CD8-positive, alpha-beta T cell (primary cell): ENCODE measurements at regions of chr21 and their contacts with region 1.

Region 1: DNA sequence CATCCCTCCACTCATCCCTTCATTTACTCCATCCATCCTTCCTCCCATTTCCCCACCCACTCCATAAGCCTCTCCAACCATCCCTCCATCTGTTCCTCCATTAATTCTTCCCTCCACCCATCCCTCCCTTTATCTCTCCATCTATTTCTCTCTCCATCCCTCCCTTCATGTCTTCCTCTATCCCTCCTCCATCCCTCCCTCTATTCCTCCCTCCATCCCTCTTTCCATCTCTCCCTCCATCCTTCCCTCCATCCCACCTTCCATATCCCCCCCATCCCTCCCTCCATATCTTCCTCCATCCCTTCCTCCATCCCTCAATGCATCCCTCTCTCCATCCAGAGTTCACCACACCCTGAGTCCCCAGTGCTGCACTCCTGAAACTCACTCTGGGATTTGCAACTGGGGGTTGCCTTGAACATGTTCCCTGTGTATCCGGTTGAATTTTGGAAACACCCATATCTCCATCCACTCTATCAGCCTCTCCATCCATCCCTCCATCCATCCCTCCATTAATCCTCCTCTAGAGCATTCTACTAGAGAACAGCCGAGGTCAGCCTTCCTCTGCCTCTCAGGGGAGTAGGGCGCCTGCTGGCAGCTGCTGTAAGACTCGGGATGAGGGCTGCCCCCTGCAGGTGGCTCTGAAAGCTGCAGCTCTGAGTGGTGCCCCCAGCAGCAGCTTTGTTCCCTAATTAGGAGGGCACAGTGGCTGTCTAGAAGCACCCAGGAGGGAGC is 39.4 kb downstream of the ABCG1 start:
- DNase-seq: peak; percentile 70 to 89 (median 84)
- ATAC-seq: peak; percentile 95
- H3K4me3 ChIP-seq: no peak overlapping the region
- H3K4me3 Mint-ChIP-seq: no peak overlapping the region
- H3K27ac ChIP-seq: no peak overlapping the region
- H3K27ac Mint-ChIP-seq: peak overlapping the region; percentile 42
- H3K4me1 ChIP-seq: peaks cover 14% of the 10 kb centered on the region
- H3K4me1 Mint-ChIP-seq: peaks cover 33% of the 10 kb centered on the region
- H3K27me3 ChIP-seq: no peaks in the 10 kb centered on the region
- H3K27me3 Mint-ChIP-seq: no peaks in the 10 kb centered on the region
- CTCF ChIP-seq: peak; percentile 93

Region 2: GRCh38 chr21:42156690-42157577 is 101.4 kb before region 1 on chr21:
- CTCF ChIA-PET with region 1: interaction called, 88 read pairs
- POLR2A ChIA-PET with region 1: no interaction called
- intact Hi-C with region 1: no loop called
- DNase-seq: no peak
- ATAC-seq: no peak
- H3K4me3 ChIP-seq: no peak overlapping the region
- H3K4me3 Mint-ChIP-seq: no peak overlapping the region
- H3K27ac ChIP-seq: no peak overlapping the region
- H3K27ac Mint-ChIP-seq: no peak overlapping the region
- H3K4me1 ChIP-seq: peaks cover 30% of the 10 kb centered on the region
- H3K4me1 Mint-ChIP-seq: peaks cover 23% of the 10 kb centered on the region
- H3K27me3 ChIP-seq: no peaks in the 10 kb centered on the region
- H3K27me3 Mint-ChIP-seq: no peaks in the 10 kb centered on the region
- CTCF ChIP-seq: no peak

Region 3: DNA sequence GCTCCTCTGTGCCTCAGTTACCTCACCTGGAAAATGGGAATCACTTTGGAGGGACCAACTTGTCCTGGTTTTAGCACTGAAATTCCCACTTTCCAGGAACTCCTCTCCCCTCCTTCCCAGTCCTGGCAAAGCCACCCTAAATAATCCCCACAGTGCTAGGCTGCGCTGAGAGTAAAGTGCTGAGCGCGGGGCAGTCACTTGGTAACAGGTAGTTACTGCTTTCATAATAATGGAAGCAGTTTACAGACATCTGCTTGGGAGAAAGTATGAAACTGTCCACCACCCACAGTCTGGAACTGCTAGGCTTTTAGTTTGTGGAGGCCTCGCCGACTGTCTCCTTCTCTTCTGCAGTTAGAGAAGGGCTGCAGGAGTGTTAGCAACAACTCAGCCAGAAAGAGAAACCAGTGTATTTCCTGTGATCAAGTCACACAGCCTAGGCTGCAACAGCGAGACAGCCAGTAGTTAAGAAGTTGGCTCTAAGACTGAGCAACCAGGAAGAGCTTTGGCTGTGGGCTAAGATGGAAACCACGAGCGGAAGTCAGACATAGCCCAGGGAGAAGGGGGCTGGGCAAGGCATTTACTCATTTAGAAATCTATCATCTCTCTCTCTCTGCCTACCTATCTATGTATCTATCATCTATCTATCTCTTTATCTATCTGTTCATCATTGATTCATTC is 70.2 kb before region 1 on chr21:
- CTCF ChIA-PET with region 1: interaction called, 17 read pairs
- POLR2A ChIA-PET with region 1: interaction called, 3 read pairs
- intact Hi-C with region 1: no loop called
- DNase-seq: peak; percentile 58 to 95 (median 80)
- ATAC-seq: peak; percentile 85
- H3K4me3 ChIP-seq: peak overlapping the region; percentile 11 to 22
- H3K4me3 Mint-ChIP-seq: peak overlapping the region; percentile 74
- H3K27ac ChIP-seq: peak overlapping the region; percentile 63 to 85
- H3K27ac Mint-ChIP-seq: peak overlapping the region; percentile 97
- H3K4me1 ChIP-seq: peaks cover 86% of the 10 kb centered on the region
- H3K4me1 Mint-ChIP-seq: peaks cover 77% of the 10 kb centered on the region
- H3K27me3 ChIP-seq: no peaks in the 10 kb centered on the region
- H3K27me3 Mint-ChIP-seq: no peaks in the 10 kb centered on the region
- CTCF ChIP-seq: no peak

Region 4: DNA sequence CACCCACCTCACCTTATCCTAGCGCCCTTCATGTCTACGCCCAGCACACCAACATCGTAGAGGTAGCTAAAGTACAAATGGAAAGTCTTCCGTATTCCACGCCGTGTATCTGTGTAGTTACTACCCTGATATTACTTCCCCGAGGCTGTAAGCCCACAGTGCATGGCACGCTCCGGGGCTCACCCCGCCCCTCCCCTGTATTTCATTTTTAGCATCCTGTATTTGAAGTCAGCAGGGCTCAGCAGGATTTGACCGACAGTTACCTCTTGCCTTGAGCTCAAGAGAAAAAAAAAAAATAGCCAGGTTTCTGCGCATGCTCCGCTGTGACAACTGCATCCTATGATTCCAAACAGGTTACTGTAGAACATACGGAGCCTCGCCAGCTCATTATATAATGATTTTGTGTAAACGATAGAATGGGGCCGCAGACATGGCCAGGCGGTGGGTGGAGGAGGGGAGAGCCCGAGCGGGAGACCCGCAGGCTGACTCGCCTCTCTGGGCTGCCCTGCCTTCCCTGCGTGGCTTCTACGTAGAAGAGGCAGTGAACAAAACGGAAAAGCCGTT is 38.1 kb before region 1 on chr21:
- CTCF ChIA-PET with region 1: interaction called, 14 read pairs
- POLR2A ChIA-PET with region 1: interaction called, 7 read pairs
- intact Hi-C with region 1: loop called in 1 of 2 experiments (anchors 1 kb)
- DNase-seq: peak; percentile 34 to 96 (median 70)
- ATAC-seq: peak; percentile 87
- H3K4me3 ChIP-seq: peak overlapping the region; percentile 84 to 88
- H3K4me3 Mint-ChIP-seq: peak overlapping the region; percentile 89
- H3K27ac ChIP-seq: peak overlapping the region; percentile 74 to 91
- H3K27ac Mint-ChIP-seq: peak overlapping the region; percentile 94
- H3K4me1 ChIP-seq: peaks cover 11% of the 10 kb centered on the region
- H3K4me1 Mint-ChIP-seq: peaks cover 32% of the 10 kb centered on the region
- H3K27me3 ChIP-seq: no peaks in the 10 kb centered on the region
- H3K27me3 Mint-ChIP-seq: no peaks in the 10 kb centered on the region
- CTCF ChIP-seq: no peak

Region 5: GRCh38 chr21:42233067-42233961 is 25.0 kb before region 1 on chr21:
- CTCF ChIA-PET with region 1: interaction called, 27 read pairs
- POLR2A ChIA-PET with region 1: interaction called, 4 read pairs
- intact Hi-C with region 1: loop called in 1 of 2 experiments (anchors 2 kb)
- DNase-seq: peak; percentile 49 to 95 (median 72)
- ATAC-seq: peak; percentile 57
- H3K4me3 ChIP-seq: peak overlapping the region in 1 of 2 experiments; percentile 1
- H3K4me3 Mint-ChIP-seq: peak overlapping the region; percentile 70
- H3K27ac ChIP-seq: peak overlapping the region; percentile 69 to 93
- H3K27ac Mint-ChIP-seq: peak overlapping the region; percentile 95
- H3K4me1 ChIP-seq: peaks cover 80% of the 10 kb centered on the region
- H3K4me1 Mint-ChIP-seq: peaks cover 94% of the 10 kb centered on the region
- H3K27me3 ChIP-seq: no peaks in the 10 kb centered on the region
- H3K27me3 Mint-ChIP-seq: no peaks in the 10 kb centered on the region
- CTCF ChIP-seq: peak; percentile 50